ENCODE measurements at regions of chr6 and their contacts with region 1.

Region 1: GRCh38 chr6:29752451-29753308 is 29.4 kb downstream of the HLA-F start:
- DNase-seq: peak; percentile 74 to 87 (median 79)
- H3K4me3 ChIP-seq: peak overlapping the region; percentile 93
- H3K4me3 Mint-ChIP-seq: peak overlapping the region; percentile 87 to 98 (median 92)
- H3K27ac ChIP-seq: peak overlapping the region; percentile 82
- H3K27ac Mint-ChIP-seq: peak overlapping the region; percentile 78 to 100 (median 93)
- H3K4me1 ChIP-seq: peaks cover 27% of the 10 kb centered on the region
- H3K4me1 Mint-ChIP-seq: peaks cover 44 to 56% (median 45%) of the 10 kb centered on the region in 3 donors
- H3K27me3 ChIP-seq: no peaks in the 10 kb centered on the region
- H3K27me3 Mint-ChIP-seq: peaks cover 0 to 10% of the 10 kb centered on the region in 2 donors

Region 2: DNA sequence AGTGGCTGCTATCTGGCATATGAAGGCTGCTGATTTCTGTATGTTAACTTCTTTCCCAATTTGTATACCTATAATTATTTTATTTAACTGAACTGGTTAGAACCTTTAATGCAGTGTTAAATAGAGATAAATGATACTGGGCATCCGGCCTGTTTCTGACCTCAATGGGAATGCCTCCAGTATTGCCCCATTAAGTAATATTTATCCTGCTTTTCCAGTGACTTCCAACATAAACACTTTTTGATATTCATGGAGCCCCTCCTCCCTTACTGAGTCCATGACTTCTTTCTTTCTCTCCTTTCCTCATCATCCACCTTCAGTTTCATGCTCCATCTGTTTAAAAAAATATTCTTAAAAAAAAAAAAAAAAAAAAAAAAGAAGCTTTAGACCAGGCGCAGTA is 837.7 kb before region 1 on chr6:
- CTCF ChIA-PET with region 1: no interaction called
- POLR2A ChIA-PET with region 1: no interaction called
- DNase-seq: no peak
- H3K4me3 ChIP-seq: no peak overlapping the region
- H3K4me3 Mint-ChIP-seq: no peak overlapping the region
- H3K27ac ChIP-seq: no peak overlapping the region
- H3K27ac Mint-ChIP-seq: no peak overlapping the region
- H3K4me1 ChIP-seq: peaks cover 7% of the 10 kb centered on the region
- H3K4me1 Mint-ChIP-seq: peaks cover 8 to 26% (median 21%) of the 10 kb centered on the region in 3 donors
- H3K27me3 ChIP-seq: no peaks in the 10 kb centered on the region
- H3K27me3 Mint-ChIP-seq: peaks cover 0 to 2% of the 10 kb centered on the region in 2 donors

Region 3: DNA sequence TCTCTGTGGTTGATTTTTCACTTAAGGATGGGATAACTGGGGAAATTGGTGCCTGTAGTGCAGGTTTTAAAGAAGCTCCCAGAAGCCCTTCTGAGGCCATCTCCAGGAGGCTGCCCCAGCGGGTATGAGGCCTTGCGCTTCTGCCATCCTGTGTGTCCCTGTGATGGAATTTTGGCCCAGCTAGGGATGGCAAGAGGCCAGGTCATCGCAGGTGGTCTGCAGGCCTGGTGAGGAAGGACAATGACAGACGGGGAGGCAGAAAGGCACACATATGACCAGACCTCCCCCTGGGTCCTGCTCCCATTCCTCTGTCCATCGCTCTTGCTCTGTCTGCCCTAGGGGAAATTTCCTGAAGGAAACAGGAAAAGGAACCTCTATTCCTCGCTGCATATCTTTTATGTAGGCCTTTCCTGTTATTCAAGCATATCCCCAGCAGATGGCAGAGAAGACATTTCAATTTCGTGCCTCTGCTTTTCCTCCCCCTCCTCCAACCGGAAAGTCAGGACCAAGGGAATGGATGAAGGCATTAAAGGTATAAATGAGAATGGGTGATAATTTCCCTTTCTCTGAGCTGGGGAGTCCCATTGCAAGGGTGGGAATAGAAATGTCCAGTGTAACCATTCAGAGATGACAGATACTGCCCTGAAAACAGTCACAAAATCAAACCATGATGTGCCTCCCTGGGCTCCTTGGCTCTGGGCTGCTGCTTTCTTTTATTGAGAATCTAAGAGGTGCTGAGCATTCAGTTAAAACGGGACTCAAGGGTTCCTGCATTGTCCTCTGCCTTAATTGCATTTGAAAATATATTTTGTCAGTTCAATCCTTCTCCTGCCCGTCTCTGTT is 47.1 kb before region 1 on chr6:
- CTCF ChIA-PET with region 1: interaction called, 56 read pairs
- POLR2A ChIA-PET with region 1: interaction called, 8 read pairs
- DNase-seq: peak in 1 of 5 donors; percentile 52
- H3K4me3 ChIP-seq: no peak overlapping the region
- H3K4me3 Mint-ChIP-seq: peak overlapping the region in 4 of 7 donors; percentile 4 to 72 (median 50)
- H3K27ac ChIP-seq: no peak overlapping the region
- H3K27ac Mint-ChIP-seq: peak overlapping the region in 7 of 8 donors; percentile 30 to 81 (median 70)
- H3K4me1 ChIP-seq: peaks cover 45% of the 10 kb centered on the region
- H3K4me1 Mint-ChIP-seq: peaks cover 30 to 57% (median 51%) of the 10 kb centered on the region in 3 donors
- H3K27me3 ChIP-seq: no peaks in the 10 kb centered on the region
- H3K27me3 Mint-ChIP-seq: peaks cover 18 to 34% of the 10 kb centered on the region in 2 donors

Region 4: DNA sequence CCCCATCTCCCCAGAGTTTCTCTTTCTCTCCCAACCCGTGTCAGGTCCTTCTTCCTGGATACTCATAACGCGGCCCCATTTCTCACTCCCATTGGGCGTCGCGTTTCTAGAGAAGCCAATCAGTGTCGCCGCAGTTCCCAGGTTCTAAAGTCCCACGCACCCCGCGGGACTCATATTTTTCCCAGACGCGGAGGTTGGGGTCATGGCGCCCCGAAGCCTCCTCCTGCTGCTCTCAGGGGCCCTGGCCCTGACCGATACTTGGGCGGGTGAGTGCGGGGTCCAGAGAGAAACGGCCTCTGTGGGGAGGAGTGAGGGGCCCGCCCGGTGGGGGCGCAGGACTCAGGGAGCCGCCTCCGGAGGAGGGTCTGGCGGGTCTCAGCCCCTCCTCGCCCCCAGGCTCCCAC is 29.4 kb before region 1 on chr6 and contains the start of gene HLA-F:
- CTCF ChIA-PET with region 1: interaction called, 19 read pairs
- POLR2A ChIA-PET with region 1: interaction called, 5 read pairs
- DNase-seq: peak in 4 of 5 donors; percentile 87 to 94 (median 88)
- H3K4me3 ChIP-seq: peak within 1 kb of the TSS; percentile 97
- H3K4me3 Mint-ChIP-seq: peak within 1 kb of the TSS; percentile 94 to 97 (median 97)
- H3K27ac ChIP-seq: peak within 1 kb of the TSS; percentile 96
- H3K27ac Mint-ChIP-seq: peak within 1 kb of the TSS; percentile 97 to 100 (median 99)
- H3K4me1 ChIP-seq: peaks cover 53% of the 10 kb centered on the region
- H3K4me1 Mint-ChIP-seq: peaks cover 53 to 54% (median 53%) of the 10 kb centered on the region in 3 donors
- H3K27me3 ChIP-seq: no peaks in the 10 kb centered on the region
- H3K27me3 Mint-ChIP-seq: peaks cover 0 to 10% of the 10 kb centered on the region in 2 donors
- total RNA-seq, gene HLA-F: 222 to 242 TPM

Region 5: GRCh38 chr6:29737707-29738630 is 14.7 kb before region 1 on chr6:
- CTCF ChIA-PET with region 1: interaction called, 126 read pairs
- POLR2A ChIA-PET with region 1: interaction called, 10 read pairs
- DNase-seq: peak; percentile 48 to 82 (median 63)
- H3K4me3 ChIP-seq: no peak overlapping the region
- H3K4me3 Mint-ChIP-seq: no peak overlapping the region
- H3K27ac ChIP-seq: no peak overlapping the region
- H3K27ac Mint-ChIP-seq: peak overlapping the region in 1 of 8 donors; percentile 33
- H3K4me1 ChIP-seq: no peaks in the 10 kb centered on the region
- H3K4me1 Mint-ChIP-seq: peaks cover 6 to 22% (median 12%) of the 10 kb centered on the region in 3 donors
- H3K27me3 ChIP-seq: no peaks in the 10 kb centered on the region
- H3K27me3 Mint-ChIP-seq: no peaks in the 10 kb centered on the region

Region 6: GRCh38 chr6:29777310-29777709 is 24.6 kb after region 1 on chr6:
- CTCF ChIA-PET with region 1: no interaction called
- POLR2A ChIA-PET with region 1: no interaction called
- DNase-seq: no peak
- H3K4me3 ChIP-seq: no peak overlapping the region
- H3K4me3 Mint-ChIP-seq: no peak overlapping the region
- H3K27ac ChIP-seq: no peak overlapping the region
- H3K27ac Mint-ChIP-seq: no peak overlapping the region
- H3K4me1 ChIP-seq: no peaks in the 10 kb centered on the region
- H3K4me1 Mint-ChIP-seq: no peaks in the 10 kb centered on the region
- H3K27me3 ChIP-seq: no peaks in the 10 kb centered on the region
- H3K27me3 Mint-ChIP-seq: peaks cover 36 to 69% of the 10 kb centered on the region in 2 donors

Region 7: GRCh38 chr6:29834564-29835436 is 82.1 kb after region 1 on chr6:
- CTCF ChIA-PET with region 1: interaction called, 11 read pairs
- POLR2A ChIA-PET with region 1: no interaction called
- DNase-seq: peak; percentile 34 to 73 (median 49)
- H3K4me3 ChIP-seq: no peak overlapping the region
- H3K4me3 Mint-ChIP-seq: no peak overlapping the region
- H3K27ac ChIP-seq: no peak overlapping the region
- H3K27ac Mint-ChIP-seq: no peak overlapping the region
- H3K4me1 ChIP-seq: no peaks in the 10 kb centered on the region
- H3K4me1 Mint-ChIP-seq: peaks cover 0 to 3% (median 0%) of the 10 kb centered on the region in 3 donors
- H3K27me3 ChIP-seq: peaks cover 23% of the 10 kb centered on the region
- H3K27me3 Mint-ChIP-seq: peaks cover 49 to 76% of the 10 kb centered on the region in 2 donors

Region 8: GRCh38 chr6:30013291-30013922 is 260.7 kb after region 1 on chr6:
- CTCF ChIA-PET with region 1: no interaction called
- POLR2A ChIA-PET with region 1: no interaction called
- DNase-seq: peak in 3 of 5 donors; percentile 12 to 44 (median 32)
- H3K4me3 ChIP-seq: no peak overlapping the region
- H3K4me3 Mint-ChIP-seq: no peak overlapping the region
- H3K27ac ChIP-seq: no peak overlapping the region
- H3K27ac Mint-ChIP-seq: no peak overlapping the region
- H3K4me1 ChIP-seq: no peaks in the 10 kb centered on the region
- H3K4me1 Mint-ChIP-seq: peaks cover 0 to 2% (median 0%) of the 10 kb centered on the region in 3 donors
- H3K27me3 ChIP-seq: peaks cover 3% of the 10 kb centered on the region
- H3K27me3 Mint-ChIP-seq: peaks cover 15 to 39% of the 10 kb centered on the region in 2 donors

Measured in CD8-positive, alpha-beta memory T cell (primary cell).